ENCODE measurements at regions of chr16 and their contacts with region 1.

Region 1: DNA sequence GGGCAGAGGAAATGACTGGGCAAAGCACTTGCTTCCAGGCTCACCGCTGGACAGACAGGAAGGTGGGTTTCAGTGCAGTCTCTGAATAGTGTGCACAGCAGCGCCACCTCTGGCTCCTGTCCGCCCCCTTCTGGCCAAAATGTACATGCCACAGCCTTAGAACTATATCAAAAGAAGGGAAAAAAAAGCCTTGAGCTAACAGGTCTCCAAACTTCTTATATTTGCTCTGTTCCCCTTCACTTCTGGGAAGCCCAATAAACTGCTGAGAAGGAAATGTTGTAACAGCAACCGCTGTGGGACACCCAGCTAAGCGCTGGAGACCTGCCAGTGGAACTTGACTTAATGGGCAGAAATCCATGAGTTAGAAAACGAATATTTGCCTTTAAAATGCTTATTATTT is 17.5 kb downstream of the COG7 start:
- DNase-seq: peak; percentile 29 to 40
- H3K4me3 ChIP-seq: no peak overlapping the region
- H3K27ac ChIP-seq: no peak overlapping the region
- H3K4me1 ChIP-seq: no peaks in the 10 kb centered on the region
- H3K27me3 ChIP-seq: no peaks in the 10 kb centered on the region
- CTCF ChIP-seq: peak; percentile 32 to 62 (median 61)
- POLR2A ChIP-seq: no peak

Region 2: GRCh38 chr16:22898874-22899348 is 536.6 kb before region 1 on chr16:
- intact Hi-C with region 1: loop called (anchors 10 kb)
- DNase-seq: peak; percentile 63 to 84
- H3K4me3 ChIP-seq: no peak overlapping the region
- H3K27ac ChIP-seq: no peak overlapping the region
- H3K4me1 ChIP-seq: no peaks in the 10 kb centered on the region
- H3K27me3 ChIP-seq: peaks cover 0 to 13% of the 10 kb centered on the region in 2 donors
- CTCF ChIP-seq: peak; percentile 73 to 81 (median 75)
- POLR2A ChIP-seq: no peak

Region 3: DNA sequence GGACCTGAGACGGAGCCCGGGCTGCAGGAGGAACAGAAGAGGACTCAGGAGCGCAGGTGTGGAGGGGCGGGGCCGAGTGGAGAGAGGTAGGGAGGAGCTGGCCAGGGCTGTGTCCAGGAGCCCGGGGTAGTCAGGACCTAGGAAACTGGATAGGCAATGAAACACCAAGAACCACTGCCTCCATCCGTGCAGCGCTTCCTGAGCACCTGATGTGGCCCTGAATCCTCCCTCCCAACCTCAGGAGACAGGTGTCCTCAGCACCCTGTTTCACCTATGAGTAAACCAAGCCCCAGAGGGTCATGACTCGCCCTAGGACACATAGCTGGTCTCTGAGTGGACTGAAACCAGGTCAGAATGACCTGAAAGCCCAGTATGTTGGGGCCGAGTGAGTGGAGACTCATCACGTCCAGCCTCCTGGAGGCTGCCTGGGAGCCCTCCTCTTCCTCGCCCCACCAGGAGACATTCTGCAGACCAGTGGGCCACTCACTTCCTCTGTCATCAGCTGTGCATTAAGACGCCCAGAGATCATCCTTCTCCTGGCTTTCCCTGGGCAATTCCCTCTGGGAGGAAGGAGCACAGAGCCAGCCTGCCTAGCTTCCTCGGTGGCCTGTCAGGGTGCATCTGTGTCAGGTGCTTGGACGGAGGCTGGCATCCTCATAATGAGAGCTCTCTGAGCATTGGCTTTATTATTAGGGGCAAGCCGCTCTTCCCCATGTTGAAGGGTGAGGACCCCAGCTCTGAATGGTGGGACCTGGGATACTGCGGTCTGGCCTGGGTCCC is 60.6 kb before region 1 on chr16:
- intact Hi-C with region 1: no loop called
- DNase-seq: no peak
- H3K4me3 ChIP-seq: no peak overlapping the region
- H3K27ac ChIP-seq: no peak overlapping the region
- H3K4me1 ChIP-seq: no peaks in the 10 kb centered on the region
- H3K27me3 ChIP-seq: no peaks in the 10 kb centered on the region
- CTCF ChIP-seq: no peak
- POLR2A ChIP-seq: no peak